ENCODE measurements at regions of chr9 and their contacts with region 1.

Region 1: DNA sequence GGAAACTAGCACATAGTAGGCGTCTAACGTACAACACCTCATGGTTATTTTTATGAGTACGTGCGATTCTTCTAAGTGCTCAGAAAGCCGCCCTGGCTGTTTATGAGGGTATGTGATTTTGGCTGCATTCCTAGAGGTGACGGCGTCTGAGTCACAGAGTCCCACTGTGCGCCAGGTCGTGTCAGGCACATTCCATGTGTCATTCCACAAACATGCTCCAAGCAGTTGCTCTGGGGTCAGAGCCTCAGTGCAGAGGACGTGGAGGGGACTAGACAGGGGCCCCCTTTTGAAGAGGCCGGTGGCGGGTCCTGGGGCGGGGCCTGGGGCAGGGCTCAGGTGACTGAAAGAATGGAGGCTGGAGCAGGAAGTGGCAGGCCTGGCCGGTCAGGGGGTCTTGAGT is 51.9 kb downstream of the NEK6 start:
- DNase-seq: peak; percentile 60 to 95
- H3K4me3 ChIP-seq: no peak overlapping the region
- H3K27ac ChIP-seq: peak overlapping the region; percentile 39 to 61
- H3K4me1 ChIP-seq: peaks cover 4 to 9% of the 10 kb centered on the region in 2 donors
- H3K27me3 ChIP-seq: no peaks in the 10 kb centered on the region
- CTCF ChIP-seq: no peak

Region 2: GRCh38 chr9:124190761-124191160 is 118.9 kb before region 1 on chr9:
- intact Hi-C with region 1: no loop called
- DNase-seq: peak in 1 of 2 donors; percentile 52
- H3K4me3 ChIP-seq: no peak overlapping the region
- H3K27ac ChIP-seq: no peak overlapping the region
- H3K4me1 ChIP-seq: no peaks in the 10 kb centered on the region
- H3K27me3 ChIP-seq: no peaks in the 10 kb centered on the region
- CTCF ChIP-seq: no peak

Region 3: GRCh38 chr9:124285903-124286291 is 23.8 kb before region 1 on chr9:
- intact Hi-C with region 1: loop called (anchors 2 kb)
- DNase-seq: peak; percentile 55 to 88
- H3K4me3 ChIP-seq: no peak overlapping the region
- H3K27ac ChIP-seq: peak overlapping the region; percentile 88 to 93
- H3K4me1 ChIP-seq: peaks cover 16 to 52% of the 10 kb centered on the region in 2 donors
- H3K27me3 ChIP-seq: no peaks in the 10 kb centered on the region
- CTCF ChIP-seq: no peak

Measured in ascending aorta (tissue), 2 donors.